HCT116 (cell line): ENCODE measurements at regions of chr6 and their contacts with region 1.

Region 1: DNA sequence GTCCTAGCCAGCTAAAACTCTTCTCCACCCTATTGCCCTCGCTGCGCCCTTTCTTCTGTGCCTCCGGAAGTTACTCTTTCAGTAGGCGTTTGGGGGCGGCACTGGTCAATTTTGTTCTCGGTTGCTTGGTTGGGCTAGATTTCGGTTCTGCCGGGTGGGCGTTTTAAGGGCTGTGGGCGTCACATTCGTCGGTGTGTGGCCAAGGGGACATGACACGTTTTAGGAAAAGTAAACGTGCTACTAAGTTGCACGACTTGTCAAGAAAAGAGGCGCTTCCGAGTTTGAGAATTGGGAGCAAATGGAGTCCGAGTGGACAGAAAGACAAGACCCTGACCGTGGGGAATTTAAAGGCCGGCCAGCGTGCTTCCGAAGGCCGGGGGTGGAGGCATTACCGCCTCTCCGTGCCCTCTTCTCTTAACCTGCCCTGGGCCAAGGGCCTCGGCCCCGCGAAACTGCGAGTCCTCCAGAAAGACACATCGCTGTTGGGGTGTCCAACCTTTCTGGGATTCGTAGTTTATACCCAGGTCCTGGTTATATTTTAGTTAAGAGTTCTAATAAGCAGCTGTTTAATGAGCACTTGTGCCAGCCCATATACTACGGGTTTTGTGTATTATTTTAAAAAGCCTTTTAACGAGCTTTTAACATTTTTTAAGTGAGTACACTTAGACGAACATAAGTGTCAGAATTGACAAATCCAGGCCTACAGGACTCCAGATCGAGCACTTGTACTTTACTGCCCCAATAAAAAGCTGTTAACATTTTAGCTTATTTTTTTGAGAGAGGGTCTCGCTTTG is 661 bp upstream of the BAG6 start:
- DNase-seq: no peak
- ATAC-seq: peak; percentile 75
- H3K4me3 ChIP-seq: peak overlapping the region; percentile 55 to 66
- H3K27ac ChIP-seq: peak overlapping the region; percentile 89
- H3K4me1 ChIP-seq: peaks cover 7 to 21% of the 10 kb centered on the region in 2 experiments
- H3K27me3 ChIP-seq: no peaks in the 10 kb centered on the region
- CTCF ChIP-seq: no peak
- POLR2A ChIP-seq: peak; percentile 68
- RAD21 ChIP-seq: no peak

Region 2: GRCh38 chr6:31546962-31547726 is 106.0 kb before region 1 on chr6 and contains the start of gene NFKBIL1:
- CTCF ChIA-PET with region 1: no interaction called
- POLR2A ChIA-PET with region 1: interaction called, 4 read pairs
- RAD21 ChIA-PET with region 1: no interaction called
- intact Hi-C with region 1: loop called (anchors 1 kb)
- DNase-seq: peak; percentile 97
- ATAC-seq: peak; percentile 78
- H3K4me3 ChIP-seq: peak within 1 kb of the TSS; percentile 51 to 67
- H3K27ac ChIP-seq: peak within 1 kb of the TSS; percentile 50
- H3K4me1 ChIP-seq: peaks cover 19 to 30% of the 10 kb centered on the region in 2 experiments
- H3K27me3 ChIP-seq: no peaks in the 10 kb centered on the region
- CTCF ChIP-seq: no peak
- POLR2A ChIP-seq: peak; percentile 37
- RAD21 ChIP-seq: no peak
- total RNA-seq, gene NFKBIL1: 26.6 TPM

Region 3: DNA sequence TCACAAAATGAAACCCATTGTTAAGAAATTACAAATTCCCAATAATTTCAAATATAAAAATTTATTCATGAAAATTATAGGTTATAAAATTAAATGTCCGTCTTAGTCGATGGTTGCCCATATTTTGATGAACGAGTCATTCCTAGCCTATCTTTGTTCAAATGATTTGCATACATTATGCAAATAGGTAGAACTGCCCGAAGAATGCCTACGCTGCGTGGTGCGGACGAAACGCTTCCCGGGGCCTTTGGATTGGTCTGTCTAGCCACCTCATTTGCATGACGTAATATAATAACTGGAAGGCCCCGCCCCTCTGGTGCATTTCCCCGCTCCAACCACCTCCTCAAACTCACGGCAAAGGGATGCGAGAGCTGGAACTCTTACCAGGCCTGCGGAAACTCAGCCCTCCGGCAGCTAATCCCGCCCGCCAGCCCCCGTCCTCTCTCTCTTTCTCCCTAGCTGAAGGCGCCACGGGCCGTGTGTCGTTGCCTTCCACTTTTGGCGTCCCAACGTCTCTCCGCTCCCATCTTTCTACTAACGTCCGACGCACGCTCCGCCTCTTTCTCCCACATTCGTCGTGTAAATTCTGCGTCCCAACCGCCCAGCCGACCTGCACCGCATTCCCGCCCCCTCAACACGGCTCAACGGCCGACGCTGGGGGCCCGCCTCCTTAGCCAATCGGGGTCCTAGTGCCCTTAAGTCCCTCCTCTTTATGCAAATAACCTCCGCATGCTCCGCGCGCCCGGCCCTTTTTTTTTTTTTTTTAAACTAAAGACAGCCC is 33.1 kb before region 1 on chr6:
- CTCF ChIA-PET with region 1: no interaction called
- POLR2A ChIA-PET with region 1: interaction called, 4 read pairs
- RAD21 ChIA-PET with region 1: no interaction called
- intact Hi-C with region 1: loop called (anchors 1 kb)
- DNase-seq: peak; percentile 98
- ATAC-seq: peak; percentile 92
- H3K4me3 ChIP-seq: peak overlapping the region; percentile 57 to 61
- H3K27ac ChIP-seq: peak overlapping the region; percentile 77
- H3K4me1 ChIP-seq: peaks cover 6 to 18% of the 10 kb centered on the region in 2 experiments; a peak in 3 of 4 replicates
- H3K27me3 ChIP-seq: no peaks in the 10 kb centered on the region
- CTCF ChIP-seq: no peak
- POLR2A ChIP-seq: peak; percentile 68
- RAD21 ChIP-seq: no peak

Region 4: GRCh38 chr6:31639449-31639861 is 13.7 kb before region 1 on chr6:
- CTCF ChIA-PET with region 1: no interaction called
- POLR2A ChIA-PET with region 1: interaction called, 13 read pairs
- RAD21 ChIA-PET with region 1: no interaction called
- intact Hi-C with region 1: no loop called
- DNase-seq: no peak
- ATAC-seq: no peak
- H3K4me3 ChIP-seq: no peak overlapping the region
- H3K27ac ChIP-seq: no peak overlapping the region
- H3K4me1 ChIP-seq: no peaks in the 10 kb centered on the region
- H3K27me3 ChIP-seq: no peaks in the 10 kb centered on the region
- CTCF ChIP-seq: no peak
- POLR2A ChIP-seq: no peak
- RAD21 ChIP-seq: no peak